Heart left ventricle (tissue), 16 donors: ENCODE measurements at regions of chr14 and their contacts with region 1.

Region 1: GRCh38 chr14:76876076-76876475 is 49.9 kb downstream of the LRRC74A start:
- DNase-seq: peak in 4 of 5 donors; percentile 54 to 65 (median 62)
- ATAC-seq: peak; percentile 75 to 90 (median 88)
- H3K4me3 ChIP-seq: no peak overlapping the region
- H3K27ac ChIP-seq: no peak overlapping the region
- H3K4me1 ChIP-seq: peaks cover 0 to 5% (median 0%) of the 10 kb centered on the region in 12 donors
- H3K27me3 ChIP-seq: no peaks in the 10 kb centered on the region
- CTCF ChIP-seq: peak; percentile 84 to 98 (median 92)
- POLR2A ChIP-seq: no peak

Region 2: DNA sequence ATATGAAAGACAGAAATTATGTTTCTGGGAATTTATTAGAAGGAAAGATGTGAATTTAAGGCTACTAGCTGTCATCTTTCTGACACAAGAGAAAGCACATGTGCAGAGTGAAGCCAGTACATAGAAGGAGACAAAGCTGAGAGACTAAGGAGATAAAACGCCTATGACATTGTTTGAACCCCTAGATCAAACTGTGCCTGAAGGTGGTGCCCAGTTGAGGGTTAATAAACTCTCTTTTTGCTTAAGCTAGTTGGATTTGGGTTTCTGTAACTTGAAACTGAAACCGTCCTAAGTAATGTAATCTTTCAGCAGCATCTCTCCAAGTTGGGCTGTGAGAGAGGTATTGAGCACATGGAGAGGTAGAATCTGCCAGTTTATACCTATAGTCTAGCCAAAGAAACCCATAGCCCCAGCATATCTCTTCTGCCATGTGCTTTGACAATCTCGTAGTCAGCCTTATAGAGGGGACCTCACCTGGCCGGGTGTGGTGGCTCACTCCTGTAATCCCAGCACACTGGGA is 34.4 kb after region 1 on chr14:
- intact Hi-C with region 1: loop called in 6 of 10 experiments (anchors 2 to 5 kb)
- DNase-seq: no peak
- ATAC-seq: no peak
- H3K4me3 ChIP-seq: no peak overlapping the region
- H3K27ac ChIP-seq: no peak overlapping the region
- H3K4me1 ChIP-seq: peaks cover 4 to 29% (median 11%) of the 10 kb centered on the region in 12 donors
- H3K27me3 ChIP-seq: no peaks in the 10 kb centered on the region
- CTCF ChIP-seq: no peak
- POLR2A ChIP-seq: no peak

Region 3: GRCh38 chr14:76920331-76921087 is 44.4 kb after region 1 on chr14:
- intact Hi-C with region 1: no loop called
- DNase-seq: peak in 2 of 5 donors; percentile 46 to 49
- ATAC-seq: no peak
- H3K4me3 ChIP-seq: no peak overlapping the region
- H3K27ac ChIP-seq: peak overlapping the region; percentile 88 to 99 (median 94)
- H3K4me1 ChIP-seq: peaks cover 21 to 70% (median 50%) of the 10 kb centered on the region in 12 donors
- H3K27me3 ChIP-seq: no peaks in the 10 kb centered on the region
- CTCF ChIP-seq: no peak
- POLR2A ChIP-seq: no peak

Region 4: DNA sequence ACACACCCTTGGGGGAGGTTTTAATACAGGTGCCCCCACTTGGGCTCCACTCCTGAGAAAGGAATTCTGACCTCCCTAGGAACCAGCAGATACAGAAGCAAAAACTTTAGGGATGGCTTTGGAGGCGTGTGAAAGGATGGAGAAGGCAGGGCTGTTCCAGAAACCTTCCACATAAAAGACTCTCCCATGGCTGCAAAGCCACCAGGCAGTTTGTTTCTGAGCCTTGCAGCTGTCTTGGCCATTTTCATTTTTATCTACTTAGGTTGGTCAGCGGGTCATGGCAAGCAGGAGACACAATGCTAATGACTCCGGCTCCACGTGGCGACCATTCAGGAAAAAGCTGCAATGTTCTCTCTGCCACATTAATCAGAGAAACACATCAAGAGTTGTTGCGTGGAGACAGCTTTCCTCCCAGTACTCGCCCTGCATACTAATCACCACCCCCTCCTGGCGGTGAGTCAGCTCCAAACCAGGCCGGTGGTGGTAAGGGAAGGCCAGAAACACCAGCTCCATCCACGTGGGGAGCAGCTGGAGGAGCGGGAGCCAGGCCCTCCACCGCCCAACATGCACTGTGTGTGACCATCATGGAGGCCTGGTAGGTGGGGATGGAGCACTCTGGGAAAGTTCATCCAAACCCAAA is 183.3 kb after region 1 on chr14:
- intact Hi-C with region 1: no loop called
- DNase-seq: peak in 3 of 5 donors; percentile 38 to 70 (median 65)
- ATAC-seq: peak in 3 of 4 donors; percentile 56 to 73 (median 60)
- H3K4me3 ChIP-seq: no peak overlapping the region
- H3K27ac ChIP-seq: peak overlapping the region in 2 of 12 donors; percentile 18 to 38
- H3K4me1 ChIP-seq: peaks cover 0 to 17% (median 0%) of the 10 kb centered on the region in 12 donors
- H3K27me3 ChIP-seq: no peaks in the 10 kb centered on the region
- CTCF ChIP-seq: peak in 6 of 12 donors; percentile 12 to 27 (median 20)
- POLR2A ChIP-seq: no peak

Region 5: DNA sequence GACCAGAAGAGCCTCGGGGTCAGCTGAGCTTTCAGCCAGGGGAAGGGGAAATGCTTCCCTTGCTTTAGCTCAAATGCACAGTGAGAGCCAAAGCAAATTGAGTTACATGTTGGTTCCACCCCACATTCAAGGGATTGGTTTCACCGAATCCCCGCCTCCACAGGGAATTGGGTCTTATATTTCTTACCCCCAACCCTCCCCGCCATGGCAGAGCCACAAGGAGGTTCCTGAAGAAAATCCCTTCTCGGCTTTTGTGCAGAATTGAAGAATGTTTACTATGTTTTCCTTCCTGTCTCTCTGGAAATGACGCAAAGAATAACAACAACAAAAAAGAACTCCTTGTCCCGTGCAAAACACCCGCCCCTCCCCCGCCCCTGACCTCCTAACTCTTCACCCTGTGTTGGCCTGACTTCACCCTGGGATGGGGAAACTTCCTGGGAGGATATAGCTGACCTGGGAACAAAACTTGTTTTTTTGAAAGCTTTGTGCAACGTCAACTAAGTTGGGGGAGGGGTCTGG is 200.1 kb after region 1 on chr14:
- intact Hi-C with region 1: loop called in 3 of 10 experiments (anchors 2 to 5 kb)
- DNase-seq: peak; percentile 79 to 86 (median 85)
- ATAC-seq: peak; percentile 90 to 95 (median 93)
- H3K4me3 ChIP-seq: peak overlapping the region in 10 of 12 donors; percentile 7 to 49 (median 36)
- H3K27ac ChIP-seq: peak overlapping the region; percentile 87 to 96 (median 91)
- H3K4me1 ChIP-seq: peaks cover 0 to 31% (median 24%) of the 10 kb centered on the region in 12 donors
- H3K27me3 ChIP-seq: no peaks in the 10 kb centered on the region
- CTCF ChIP-seq: no peak
- POLR2A ChIP-seq: peak in 1 of 2 donors; percentile 50

Region 6: DNA sequence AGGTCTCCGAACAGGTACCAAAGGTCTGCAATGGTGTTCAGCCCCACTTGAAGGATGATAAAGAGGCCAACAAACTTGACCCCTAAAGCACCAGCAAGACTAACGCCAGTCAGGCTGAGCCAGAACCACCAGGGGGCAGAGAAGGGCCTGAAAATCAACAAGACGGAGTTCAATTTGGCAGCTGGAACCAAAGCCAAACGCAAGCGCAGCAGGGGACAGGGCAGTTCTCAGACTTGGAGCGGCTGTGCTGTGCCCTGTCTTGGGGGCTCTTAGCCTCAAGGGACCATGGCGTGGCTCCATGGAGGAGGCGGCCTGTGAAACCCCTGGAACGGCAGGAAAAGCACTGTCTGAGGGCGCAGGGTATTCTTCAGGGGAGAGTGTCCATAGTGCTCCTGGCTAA is 425.0 kb after region 1 on chr14:
- intact Hi-C with region 1: loop called in 1 of 10 experiments (anchors 5 kb)
- DNase-seq: peak in 4 of 5 donors; percentile 57 to 82 (median 68)
- ATAC-seq: peak; percentile 37 to 73 (median 72)
- H3K4me3 ChIP-seq: no peak overlapping the region
- H3K27ac ChIP-seq: no peak overlapping the region
- H3K4me1 ChIP-seq: peaks cover 0 to 17% (median 0%) of the 10 kb centered on the region in 12 donors
- H3K27me3 ChIP-seq: no peaks in the 10 kb centered on the region
- CTCF ChIP-seq: peak; percentile 41 to 71 (median 58)
- POLR2A ChIP-seq: no peak